Adrenal gland (tissue), 19 donors: ENCODE measurements at regions of chr3 and their contacts with region 1.

Region 1: DNA sequence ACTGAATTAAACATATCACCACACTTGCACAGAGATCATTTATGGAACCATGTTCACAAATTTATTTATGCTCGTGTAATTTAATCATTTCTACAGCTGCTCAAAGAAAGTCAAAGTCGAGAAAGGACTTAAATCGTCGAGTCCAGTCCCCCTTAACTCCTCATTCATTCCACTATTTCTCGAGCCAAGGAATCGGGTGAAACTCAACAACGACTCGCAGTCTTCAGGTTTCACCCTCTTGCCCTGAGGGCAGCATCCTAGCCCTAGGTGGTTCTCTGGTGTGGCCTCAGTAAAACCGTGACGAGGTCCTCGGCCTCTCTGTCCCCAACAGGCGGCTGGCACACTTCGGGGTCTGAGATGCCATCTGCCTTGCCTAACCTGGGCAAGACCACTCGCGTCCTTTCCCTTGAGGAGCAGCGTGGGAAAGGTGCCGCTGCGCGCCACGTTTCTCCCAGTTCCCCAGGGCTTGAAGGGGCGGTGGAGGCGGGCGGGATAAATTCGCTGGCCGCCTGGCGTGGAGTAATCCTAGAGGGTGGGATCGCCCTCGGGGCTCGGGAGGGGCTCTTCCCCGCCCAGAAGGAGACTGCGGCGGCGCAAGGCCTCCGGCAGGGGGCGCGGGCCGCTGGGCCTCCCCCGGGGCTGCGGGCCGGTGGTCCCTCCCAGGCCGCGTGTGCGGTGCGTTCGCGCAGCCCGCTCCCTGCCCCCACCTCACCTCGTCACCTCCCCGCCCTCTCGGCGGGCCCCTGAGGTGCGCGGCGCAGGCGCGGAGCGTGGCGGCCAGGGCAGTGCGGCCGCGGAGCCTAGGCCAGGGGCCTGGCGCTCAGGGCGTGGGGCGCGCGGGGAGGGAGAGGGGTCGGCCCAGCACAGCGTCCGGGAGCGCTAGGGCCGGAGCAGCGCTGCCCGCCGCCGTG is at the start of gene ZNF639:
- DNase-seq: peak; percentile 84 to 88 (median 85)
- H3K4me3 ChIP-seq: peak within 1 kb of the TSS; percentile 62 to 96 (median 73)
- H3K27ac ChIP-seq: peak within 1 kb of the TSS; percentile 79 to 99 (median 95)
- H3K4me1 ChIP-seq: peaks cover 14 to 31% of the 10 kb centered on the region in 2 donors
- H3K27me3 ChIP-seq: no peaks in the 10 kb centered on the region
- CTCF ChIP-seq: peak; percentile 34 to 90 (median 70)
- POLR2A ChIP-seq: peak; percentile 75 to 80
- total RNA-seq, gene ZNF639: 25.9 to 53.4 (median 44.7) TPM

Region 2: DNA sequence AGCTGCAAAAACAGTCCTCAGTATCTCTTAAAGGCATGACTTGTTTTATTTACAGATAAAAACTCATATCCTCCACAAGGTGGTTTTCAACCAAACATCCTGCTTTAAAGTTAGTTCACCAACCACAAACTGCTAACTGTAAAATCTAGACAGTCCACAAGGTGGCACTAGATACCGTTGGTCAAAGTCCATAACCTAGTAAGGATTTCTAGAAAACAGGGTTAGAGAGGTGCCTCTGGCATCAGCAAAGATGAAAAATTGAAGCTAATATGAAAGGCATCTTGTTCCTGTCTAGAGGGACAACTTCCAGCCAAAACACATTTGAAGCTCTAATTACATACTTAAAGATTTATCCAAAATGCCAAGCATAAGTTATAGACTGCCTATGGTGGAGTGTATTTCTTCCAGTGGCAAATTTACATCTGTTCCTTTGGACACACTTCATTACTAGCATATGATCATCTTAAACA is 307.0 kb before region 1 on chr3:
- intact Hi-C with region 1: loop called in 1 of 2 experiments (anchors 5 kb)
- DNase-seq: peak in 6 of 7 donors; percentile 43 to 74 (median 61)
- H3K4me3 ChIP-seq: no peak overlapping the region
- H3K27ac ChIP-seq: no peak overlapping the region
- H3K4me1 ChIP-seq: peaks cover 3 to 11% of the 10 kb centered on the region in 2 donors
- H3K27me3 ChIP-seq: no peaks in the 10 kb centered on the region
- CTCF ChIP-seq: peak; percentile 81 to 95 (median 87)
- POLR2A ChIP-seq: no peak

Region 3: DNA sequence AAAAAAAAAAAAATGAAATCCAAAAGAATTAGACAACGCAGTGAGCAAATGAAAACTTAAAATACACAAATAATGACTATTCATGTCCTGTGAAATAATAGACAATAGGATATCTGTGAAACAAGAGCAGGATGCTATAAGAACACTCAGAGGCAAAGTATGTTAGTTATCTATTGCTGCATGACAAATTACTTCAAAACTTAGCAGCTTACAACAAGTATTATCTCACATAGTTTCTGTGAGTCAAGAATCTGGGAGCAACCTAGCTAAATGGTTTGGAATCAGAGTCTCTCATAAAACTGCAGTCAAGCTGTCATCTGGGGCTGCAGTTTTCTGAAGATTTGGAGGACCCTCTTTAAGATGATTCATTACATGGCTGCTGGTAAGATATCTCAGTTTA is 214.5 kb before region 1 on chr3:
- intact Hi-C with region 1: loop called in 1 of 2 experiments (anchors 5 kb)
- DNase-seq: no peak
- H3K4me3 ChIP-seq: no peak overlapping the region
- H3K27ac ChIP-seq: no peak overlapping the region
- H3K4me1 ChIP-seq: no peaks in the 10 kb centered on the region
- H3K27me3 ChIP-seq: no peaks in the 10 kb centered on the region
- CTCF ChIP-seq: no peak
- POLR2A ChIP-seq: no peak

Region 4: GRCh38 chr3:179473565-179473964 is 151.0 kb after region 1 on chr3:
- intact Hi-C with region 1: no loop called
- DNase-seq: no peak
- H3K4me3 ChIP-seq: no peak overlapping the region
- H3K27ac ChIP-seq: peak overlapping the region in 2 of 5 donors; percentile 49 to 56
- H3K4me1 ChIP-seq: no peaks in the 10 kb centered on the region
- H3K27me3 ChIP-seq: no peaks in the 10 kb centered on the region
- CTCF ChIP-seq: no peak
- POLR2A ChIP-seq: no peak